ENCODE measurements at regions of chr3 and their contacts with region 1.

Region 1: GRCh38 chr3:113838631-113839209 is at the start of gene GRAMD1C:
- DNase-seq: peak; percentile 77 to 90 (median 81)
- H3K4me3 ChIP-seq: peak within 1 kb of the TSS; percentile 42
- H3K4me3 Mint-ChIP-seq: peak within 1 kb of the TSS; percentile 76 to 88 (median 82)
- H3K27ac ChIP-seq: no peak within 1 kb of the TSS
- H3K27ac Mint-ChIP-seq: peak within 1 kb of the TSS in 5 of 8 donors; percentile 10 to 83 (median 43)
- H3K4me1 ChIP-seq: peaks cover 4% of the 10 kb centered on the region
- H3K4me1 Mint-ChIP-seq: peaks cover 8 to 11% (median 9%) of the 10 kb centered on the region in 3 donors
- H3K27me3 ChIP-seq: no peaks in the 10 kb centered on the region
- H3K27me3 Mint-ChIP-seq: peaks cover 0 to 1% of the 10 kb centered on the region in 2 donors
- total RNA-seq, gene GRAMD1C: 0.47 to 0.81 TPM

Region 2: DNA sequence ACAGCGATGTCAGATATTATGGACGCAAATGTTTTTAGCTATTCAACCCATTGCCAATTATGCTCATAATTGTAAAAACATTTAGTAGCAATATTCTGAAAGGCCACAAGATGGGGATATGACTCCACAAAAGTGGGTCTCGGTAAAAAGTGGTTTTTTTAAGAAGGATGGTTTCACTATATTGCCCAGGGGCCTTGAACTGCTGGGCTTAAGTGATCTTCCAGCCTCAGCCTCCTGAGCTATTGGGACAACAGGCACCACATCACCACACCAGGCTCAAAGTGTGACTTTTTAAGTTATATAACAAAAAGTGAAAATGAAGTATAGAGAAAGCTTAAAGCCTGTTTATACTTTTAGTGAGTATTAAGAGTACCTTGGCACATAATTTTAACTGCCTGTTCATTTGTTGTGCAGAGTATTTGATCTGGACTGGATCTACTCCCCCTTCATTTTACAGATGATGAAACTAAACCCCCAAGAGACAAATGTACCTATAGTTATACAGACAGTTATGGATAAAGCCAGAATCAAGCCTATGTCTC is 102.1 kb before region 1 on chr3:
- CTCF ChIA-PET with region 1: interaction called, 15 read pairs
- POLR2A ChIA-PET with region 1: no interaction called
- DNase-seq: peak in 3 of 5 donors; percentile 13 to 68 (median 65)
- H3K4me3 ChIP-seq: no peak overlapping the region
- H3K4me3 Mint-ChIP-seq: peak overlapping the region in 2 of 7 donors; percentile 51 to 56
- H3K27ac ChIP-seq: no peak overlapping the region
- H3K27ac Mint-ChIP-seq: peak overlapping the region; percentile 80 to 97 (median 88)
- H3K4me1 ChIP-seq: peaks cover 10% of the 10 kb centered on the region
- H3K4me1 Mint-ChIP-seq: peaks cover 51 to 89% (median 86%) of the 10 kb centered on the region in 3 donors
- H3K27me3 ChIP-seq: no peaks in the 10 kb centered on the region
- H3K27me3 Mint-ChIP-seq: no peaks in the 10 kb centered on the region

Region 3: GRCh38 chr3:113912552-113913236 is 74.0 kb after region 1 on chr3:
- CTCF ChIA-PET with region 1: interaction called, 10 read pairs
- POLR2A ChIA-PET with region 1: no interaction called
- DNase-seq: peak in 3 of 5 donors; percentile 33 to 50 (median 47)
- H3K4me3 ChIP-seq: no peak overlapping the region
- H3K4me3 Mint-ChIP-seq: peak overlapping the region in 6 of 7 donors; percentile 56 to 87 (median 64)
- H3K27ac ChIP-seq: no peak overlapping the region
- H3K27ac Mint-ChIP-seq: peak overlapping the region in 6 of 8 donors; percentile 56 to 84 (median 82)
- H3K4me1 ChIP-seq: no peaks in the 10 kb centered on the region
- H3K4me1 Mint-ChIP-seq: peaks cover 4 to 8% (median 5%) of the 10 kb centered on the region in 3 donors
- H3K27me3 ChIP-seq: no peaks in the 10 kb centered on the region
- H3K27me3 Mint-ChIP-seq: no peaks in the 10 kb centered on the region

Region 4: DNA sequence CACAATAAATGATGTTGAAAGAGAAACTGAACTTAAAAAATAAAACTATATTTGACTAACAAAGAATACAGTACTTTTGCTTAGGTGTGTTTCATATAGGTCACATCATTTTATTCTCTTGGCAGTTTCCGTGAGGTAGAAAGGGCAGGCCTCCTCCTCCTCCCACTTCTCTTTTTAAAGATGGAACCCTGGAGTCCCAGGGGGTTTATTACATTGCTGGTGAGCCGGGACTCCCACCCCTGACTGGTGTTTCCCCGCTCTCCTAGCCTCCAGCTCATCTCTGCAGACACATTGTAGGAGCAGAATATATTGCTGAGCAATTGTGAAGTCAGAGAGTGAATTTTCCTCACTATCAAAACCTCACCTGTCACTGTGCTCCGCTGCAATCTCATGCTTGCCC is 139.1 kb after region 1 on chr3:
- CTCF ChIA-PET with region 1: no interaction called
- POLR2A ChIA-PET with region 1: no interaction called
- DNase-seq: no peak
- H3K4me3 ChIP-seq: no peak overlapping the region
- H3K4me3 Mint-ChIP-seq: no peak overlapping the region
- H3K27ac ChIP-seq: no peak overlapping the region
- H3K27ac Mint-ChIP-seq: no peak overlapping the region
- H3K4me1 ChIP-seq: no peaks in the 10 kb centered on the region
- H3K4me1 Mint-ChIP-seq: no peaks in the 10 kb centered on the region
- H3K27me3 ChIP-seq: no peaks in the 10 kb centered on the region
- H3K27me3 Mint-ChIP-seq: peaks cover 0 to 2% of the 10 kb centered on the region in 2 donors

Measured in CD8-positive, alpha-beta memory T cell (primary cell).